HEK293 (cell line): ENCODE measurements at regions of chr6 and their contacts with region 1.

Region 1: GRCh38 chr6:70413114-70413991 is at the start of gene FAM135A:
- H3K4me3 ChIP-seq: peak within 1 kb of the TSS; percentile 75
- H3K27ac ChIP-seq: peak within 1 kb of the TSS; percentile 74; the same call in 1 of the 2 replicates
- H3K4me1 ChIP-seq: peaks cover 6% of the 10 kb centered on the region; the same call in 1 of the 2 replicates
- CTCF ChIP-seq: 0 out of 2 replicates have a peak, but pooled peaks have one; percentile 28

Region 2: DNA sequence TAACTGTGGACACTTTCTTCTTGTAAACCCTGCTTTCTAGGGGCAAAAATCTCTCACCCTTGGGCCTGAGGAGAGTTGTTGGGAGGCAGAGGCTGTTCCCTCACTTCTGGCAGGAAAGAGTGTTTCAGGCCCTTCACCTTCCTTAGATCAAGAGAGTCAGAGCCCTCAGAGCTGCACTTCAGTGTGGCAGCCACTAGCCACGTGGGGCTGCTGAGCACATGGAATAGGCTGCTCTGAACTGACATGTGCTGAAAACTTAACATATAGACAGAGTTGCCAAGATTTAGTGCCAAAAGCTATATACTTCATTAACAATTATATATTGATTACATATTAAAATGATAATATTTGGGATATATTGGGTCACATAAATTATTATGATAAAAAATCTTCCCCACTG is 612.1 kb before region 1 on chr6:
- CTCF ChIA-PET with region 1: no interaction called
- POLR2A ChIA-PET with region 1: no interaction called
- H3K4me3 ChIP-seq: no peak overlapping the region
- H3K27ac ChIP-seq: no peak overlapping the region
- H3K4me1 ChIP-seq: no peaks in the 10 kb centered on the region
- CTCF ChIP-seq: no peak

Region 3: GRCh38 chr6:70385901-70386300 is 27.5 kb before region 1 on chr6:
- CTCF ChIA-PET with region 1: no interaction called
- POLR2A ChIA-PET with region 1: interaction called, 10 read pairs
- H3K4me3 ChIP-seq: no peak overlapping the region
- H3K27ac ChIP-seq: no peak overlapping the region
- H3K4me1 ChIP-seq: no peaks in the 10 kb centered on the region; the same call in 1 of the 2 replicates
- CTCF ChIP-seq: no peak

Region 4: DNA sequence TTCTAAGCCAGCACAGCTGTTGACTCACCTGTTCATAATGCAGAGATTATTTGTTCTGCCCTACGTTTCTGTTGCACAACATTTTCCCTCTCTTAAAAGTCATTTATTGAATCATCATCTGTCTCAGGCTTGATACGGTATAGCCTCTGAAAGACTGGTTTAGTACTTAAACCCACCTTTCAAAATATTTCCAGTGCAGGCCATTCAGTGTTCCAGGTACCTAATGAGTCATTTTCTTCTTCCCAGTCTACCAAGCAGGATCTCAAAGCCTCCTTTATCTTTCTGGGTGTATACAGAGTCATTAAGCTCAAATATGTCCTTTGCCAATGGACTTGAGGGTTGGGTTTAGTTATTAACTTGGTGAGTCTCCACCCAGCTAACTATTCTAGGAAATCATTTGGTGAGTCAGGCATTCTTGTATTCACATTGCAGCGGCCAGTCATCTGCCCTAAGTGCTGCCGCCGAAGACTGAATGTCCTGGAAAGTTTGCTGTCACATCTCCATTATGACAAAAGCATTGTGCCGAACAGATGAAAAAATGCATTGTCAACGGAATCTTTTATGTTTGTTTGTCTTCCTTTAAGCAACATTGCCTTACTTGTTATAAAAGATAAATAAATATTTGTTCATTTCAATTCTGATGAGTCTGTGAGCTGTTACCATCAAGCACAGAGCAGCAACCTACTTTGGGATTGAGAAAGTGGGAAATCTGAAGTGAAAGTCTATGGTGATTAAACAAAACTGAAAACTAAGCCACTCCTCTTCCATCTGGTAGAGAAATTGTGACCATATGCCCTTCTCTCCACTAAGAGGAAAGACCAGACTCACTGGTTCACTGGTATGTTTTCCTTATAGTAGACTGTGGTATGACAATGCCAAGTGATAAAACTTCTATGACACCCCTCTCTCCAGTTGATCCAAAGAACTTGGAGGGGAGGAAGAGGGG is 14.3 kb before region 1 on chr6:
- CTCF ChIA-PET with region 1: interaction called, 4 read pairs
- POLR2A ChIA-PET with region 1: interaction called, 37 read pairs
- H3K4me3 ChIP-seq: no peak overlapping the region
- H3K27ac ChIP-seq: no peak overlapping the region
- H3K4me1 ChIP-seq: no peaks in the 10 kb centered on the region; the same call in 1 of the 2 replicates
- CTCF ChIP-seq: no peak

Region 5: DNA sequence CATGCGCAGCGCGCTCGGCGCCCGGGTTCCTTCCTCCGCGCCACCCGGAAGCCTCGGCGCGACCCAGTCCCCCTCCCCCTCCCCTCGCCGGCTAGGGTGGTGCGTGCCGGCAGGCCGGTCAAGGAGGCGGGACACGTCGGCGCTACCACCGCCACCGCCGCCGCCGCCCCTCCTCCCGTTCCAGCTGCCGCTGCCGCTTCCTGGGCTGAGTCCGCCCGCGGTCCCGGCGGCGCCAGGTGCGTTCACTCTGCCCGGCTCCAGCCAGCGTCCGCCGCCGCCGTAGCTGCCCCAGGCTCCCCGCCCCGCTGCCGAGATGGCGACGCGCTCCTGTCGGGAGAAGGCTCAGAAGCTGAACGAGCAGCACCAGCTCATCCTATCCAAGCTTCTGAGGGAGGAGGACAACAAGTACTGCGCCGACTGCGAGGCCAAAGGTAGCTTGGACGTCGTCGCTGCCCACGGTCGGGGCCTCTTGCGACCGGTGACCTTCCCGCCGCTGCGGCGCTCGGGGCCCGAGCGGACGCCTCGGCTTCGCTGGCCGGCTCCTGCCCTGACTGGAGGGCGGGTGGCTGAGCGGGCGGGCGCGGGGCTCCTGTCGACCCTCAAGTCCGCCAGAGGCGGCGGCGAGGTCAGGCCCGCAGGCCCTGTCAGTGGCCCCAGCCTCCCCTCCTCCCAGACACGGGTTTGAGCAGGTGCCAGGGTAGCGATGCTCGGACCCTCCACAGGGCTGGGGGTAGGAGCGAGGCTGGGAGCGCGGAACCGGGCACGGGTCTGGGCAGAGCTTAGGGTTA is 254.6 kb after region 1 on chr6 and contains the start of gene SMAP1:
- CTCF ChIA-PET with region 1: no interaction called
- POLR2A ChIA-PET with region 1: interaction called, 15 read pairs
- H3K4me3 ChIP-seq: peak within 1 kb of the TSS; percentile 93
- H3K27ac ChIP-seq: peak within 1 kb of the TSS; percentile 93
- H3K4me1 ChIP-seq: peaks cover 4% of the 10 kb centered on the region
- CTCF ChIP-seq: peak; percentile 22; the same call in 1 of the 2 replicates